ENCODE measurements at regions of chr13 and their contacts with region 1.

Region 1: DNA sequence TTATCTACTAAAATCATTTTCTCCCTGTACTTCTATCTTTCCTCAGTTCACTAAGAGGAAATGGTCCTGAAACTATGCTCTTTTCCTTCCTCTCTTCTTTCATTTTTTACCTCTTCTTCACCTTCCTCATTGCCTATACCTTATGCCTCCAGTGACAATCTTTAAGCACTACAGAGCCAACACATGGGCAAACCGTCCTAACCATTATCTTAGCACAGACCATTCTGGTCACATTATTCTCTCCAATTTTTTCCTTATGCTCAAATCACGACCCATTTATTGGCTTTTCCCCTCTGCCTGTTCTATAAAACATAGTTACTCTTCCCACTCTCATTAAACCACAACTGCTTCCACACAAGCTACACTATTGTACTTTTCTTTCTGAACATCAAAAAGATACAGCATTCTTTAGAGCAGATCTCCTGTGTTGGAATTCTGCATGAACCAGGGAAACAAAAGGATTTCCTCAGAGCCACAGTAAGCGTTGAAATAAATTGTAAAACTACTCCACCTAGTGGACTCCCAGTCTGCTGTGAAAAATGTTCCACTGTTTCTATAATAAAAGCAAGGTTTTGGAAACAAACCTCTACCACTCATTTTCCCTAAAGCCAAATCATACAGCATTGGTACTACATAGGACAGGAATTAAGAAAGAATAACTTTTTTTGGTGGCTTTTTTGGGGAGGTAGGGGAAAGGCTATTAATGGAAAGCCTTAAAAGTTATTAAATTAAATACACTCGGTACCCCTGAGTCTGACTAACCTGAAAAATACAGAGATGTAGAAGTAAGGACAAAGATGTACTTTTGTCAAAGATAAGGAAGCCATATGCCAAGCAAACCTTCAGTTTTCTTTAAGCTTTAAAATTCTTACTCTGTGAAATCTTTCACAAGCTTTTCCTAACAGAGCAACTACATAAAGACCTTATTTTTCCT is 19.5 kb downstream of the NUFIP1 start:
- DNase-seq: no peak
- ATAC-seq: no peak
- H3K4me3 Mint-ChIP-seq: no peak overlapping the region
- H3K27ac Mint-ChIP-seq: no peak overlapping the region
- H3K4me1 Mint-ChIP-seq: no peaks in the 10 kb centered on the region
- H3K27me3 Mint-ChIP-seq: no peaks in the 10 kb centered on the region

Region 2: DNA sequence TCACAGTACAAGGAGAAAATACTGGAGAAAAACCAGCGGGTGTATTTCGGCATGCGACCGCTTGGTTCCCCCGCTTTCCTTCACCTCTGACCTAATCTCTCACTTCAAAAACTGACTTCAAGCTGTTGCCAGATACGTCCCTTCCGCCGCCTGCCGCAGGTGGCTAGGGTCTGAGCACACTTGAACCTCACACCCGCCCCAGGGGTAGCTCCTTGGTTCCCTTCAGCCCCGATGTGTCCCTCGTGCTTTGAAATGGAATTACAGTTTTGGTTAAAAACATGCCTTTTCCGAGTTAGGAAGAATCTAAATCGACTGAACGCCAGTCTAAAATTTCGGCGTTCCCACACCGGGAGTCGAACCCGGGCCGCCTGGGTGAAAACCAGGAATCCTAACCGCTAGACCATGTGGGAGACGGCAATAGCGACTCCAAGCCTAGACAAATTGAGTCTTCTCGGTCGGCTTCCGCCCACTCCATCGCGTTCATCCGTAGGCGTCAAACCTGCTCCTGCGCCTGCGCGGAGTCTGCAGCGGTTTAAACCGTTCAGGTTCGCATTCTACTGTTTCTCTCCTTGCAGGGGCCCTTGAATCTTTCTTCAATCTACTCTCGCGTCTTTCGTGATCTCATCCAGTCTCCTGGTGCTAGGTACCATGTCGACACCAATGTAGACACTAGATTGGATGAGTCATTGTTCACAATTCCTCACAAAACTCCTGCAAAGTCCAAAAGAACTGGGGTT is 52.1 kb before region 1 on chr13:
- CTCF ChIA-PET with region 1: interaction called, 10 read pairs
- DNase-seq: peak; percentile 98
- ATAC-seq: peak; percentile 86
- H3K4me3 Mint-ChIP-seq: no peak overlapping the region
- H3K27ac Mint-ChIP-seq: no peak overlapping the region
- H3K4me1 Mint-ChIP-seq: no peaks in the 10 kb centered on the region
- H3K27me3 Mint-ChIP-seq: no peaks in the 10 kb centered on the region

Region 3: GRCh38 chr13:45340422-45340925 is 370.7 kb after region 1 on chr13:
- CTCF ChIA-PET with region 1: no interaction called
- DNase-seq: peak; percentile 90
- ATAC-seq: peak; percentile 49
- H3K4me3 Mint-ChIP-seq: peak overlapping the region; percentile 92
- H3K27ac Mint-ChIP-seq: peak overlapping the region; percentile 100
- H3K4me1 Mint-ChIP-seq: peaks cover 56% of the 10 kb centered on the region
- H3K27me3 Mint-ChIP-seq: no peaks in the 10 kb centered on the region